Motor neuron (in vitro differentiated cells): ENCODE measurements at regions of chr3 and their contacts with region 1.

Region 1: DNA sequence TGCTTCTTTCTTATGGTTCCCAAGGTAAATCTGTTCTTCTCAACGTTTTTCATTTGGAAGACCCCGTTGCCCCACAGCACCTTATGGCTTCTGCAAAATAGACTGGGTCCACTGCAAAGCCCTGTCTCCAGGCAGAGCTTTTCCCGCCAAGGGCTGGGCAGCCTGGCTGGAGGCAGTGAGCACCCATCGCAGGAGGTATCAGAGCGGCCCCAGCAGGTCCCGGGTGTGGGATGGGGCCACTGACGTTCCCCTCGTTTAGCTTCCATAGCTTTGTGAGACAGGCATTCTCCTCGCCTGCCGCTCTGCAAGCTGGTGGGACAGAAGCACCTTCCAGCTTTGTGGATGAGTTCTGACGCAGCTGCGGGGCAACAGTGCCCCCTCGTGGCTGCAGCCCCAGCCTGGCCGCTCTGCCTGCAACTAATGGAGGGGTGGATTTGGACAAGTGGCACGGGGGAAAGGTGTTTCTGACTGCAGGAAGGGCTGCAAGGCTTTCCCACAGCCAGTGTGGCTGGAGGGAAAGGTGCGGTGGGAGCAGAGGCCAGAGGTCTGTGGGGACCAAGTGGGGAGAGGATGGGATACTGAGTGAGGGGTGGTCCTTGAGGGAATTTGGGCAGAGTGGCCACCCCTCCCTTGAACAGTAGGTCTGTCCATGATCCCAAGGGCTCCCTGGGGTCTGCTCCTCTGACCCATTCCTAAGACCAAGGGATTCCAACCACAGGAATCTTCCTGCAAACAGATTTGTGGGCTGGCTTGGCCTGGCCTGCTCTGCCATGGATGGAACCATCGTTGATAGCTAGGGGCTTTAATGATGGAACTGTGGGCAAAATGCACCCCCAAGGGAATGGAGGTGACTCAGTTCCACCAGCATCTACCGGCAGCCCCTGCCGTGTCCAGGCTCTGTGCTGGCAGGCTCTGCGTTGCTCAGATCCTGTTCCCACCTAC is 99.4 kb downstream of the FBLN2 start:
- ATAC-seq: peak; percentile 47 to 96 (median 92)
- H3K4me3 ChIP-seq: no peak overlapping the region
- H3K27ac ChIP-seq: no peak overlapping the region
- H3K4me1 ChIP-seq: peaks cover 10 to 13% of the 10 kb centered on the region in 2 donors

Region 2: GRCh38 chr3:13091898-13092611 is 556.3 kb before region 1 on chr3:
- in situ Hi-C with region 1: loop called in 4 of 9 experiments (anchors 25 kb)
- ATAC-seq: peak; percentile 6 to 72 (median 38)
- H3K4me3 ChIP-seq: no peak overlapping the region
- H3K27ac ChIP-seq: no peak overlapping the region
- H3K4me1 ChIP-seq: peaks cover 32 to 36% of the 10 kb centered on the region in 2 donors

Region 3: GRCh38 chr3:13479581-13480339 is 168.6 kb before region 1 on chr3 and contains the start of gene HDAC11:
- in situ Hi-C with region 1: loop called in 2 of 9 experiments (anchors 25 kb)
- ATAC-seq: peak; percentile 88 to 97 (median 90)
- H3K4me3 ChIP-seq: peak within 1 kb of the TSS; percentile 46 to 89 (median 53)
- H3K27ac ChIP-seq: peak within 1 kb of the TSS; percentile 57 to 76
- H3K4me1 ChIP-seq: peaks cover 25 to 32% of the 10 kb centered on the region in 2 donors
- total RNA-seq, gene HDAC11: 2.7 to 23.8 (median 11.0) TPM

Region 4: GRCh38 chr3:13495921-13496723 is 152.2 kb before region 1 on chr3:
- in situ Hi-C with region 1: loop called (anchors 5 to 25 kb)
- ATAC-seq: peak; percentile 72 to 92 (median 90)
- H3K4me3 ChIP-seq: no peak overlapping the region
- H3K27ac ChIP-seq: no peak overlapping the region
- H3K4me1 ChIP-seq: peaks cover 4 to 5% of the 10 kb centered on the region in 2 donors

Region 5: GRCh38 chr3:13884851-13885703 is 236.7 kb after region 1 on chr3:
- in situ Hi-C with region 1: loop called in 6 of 9 experiments (anchors 5 to 25 kb)
- ATAC-seq: peak in 2 of 8 experiments; percentile 9 to 47
- H3K4me3 ChIP-seq: no peak overlapping the region
- H3K27ac ChIP-seq: no peak overlapping the region
- H3K4me1 ChIP-seq: no peaks in the 10 kb centered on the region

Region 6: DNA sequence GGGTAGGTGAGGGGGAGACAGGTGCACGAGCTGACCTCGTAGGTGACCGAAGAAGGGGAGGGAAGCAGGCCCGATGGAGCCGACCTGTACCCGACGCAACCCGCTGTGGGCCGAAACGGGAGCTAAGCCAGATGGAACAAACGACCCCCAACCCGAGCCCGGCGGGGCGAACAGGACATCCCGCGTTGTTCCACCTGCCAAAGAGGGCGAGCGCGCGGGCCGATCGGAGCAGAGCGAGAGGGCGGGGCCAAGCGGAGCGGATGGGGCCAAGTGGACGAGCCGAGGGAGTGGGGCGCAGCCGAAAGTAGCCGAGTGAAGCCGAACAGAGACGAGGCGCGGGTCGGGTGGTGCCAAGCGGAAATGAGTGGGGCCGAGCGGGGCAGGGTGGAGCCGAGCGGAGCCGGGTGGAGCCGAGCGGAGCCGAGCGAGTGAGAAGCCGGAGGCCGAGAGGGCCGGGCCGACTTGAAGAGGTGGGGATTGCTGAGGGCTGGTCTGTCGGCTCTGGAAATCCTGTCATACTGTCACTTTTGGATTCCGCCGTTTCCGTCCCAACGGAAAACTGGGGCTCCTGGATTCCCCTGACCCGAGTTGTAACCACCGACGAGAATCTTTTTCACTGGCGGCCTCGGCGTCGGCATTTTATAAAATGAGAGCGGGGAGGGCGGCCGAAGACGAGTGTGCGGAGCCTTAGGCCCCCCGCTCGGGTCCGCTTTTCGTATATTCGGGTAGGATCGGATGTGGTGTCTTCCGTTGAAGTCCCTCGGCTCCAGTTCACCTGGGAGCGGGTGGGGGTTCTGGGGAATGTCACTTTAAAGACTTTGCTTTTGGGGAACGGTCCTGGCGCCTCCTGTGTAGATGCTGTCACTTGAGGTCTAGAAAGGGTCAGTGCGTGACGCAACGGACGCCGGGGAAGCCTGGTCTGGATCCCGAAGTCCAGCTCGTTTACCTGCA is 247.1 kb after region 1 on chr3:
- in situ Hi-C with region 1: loop called in 3 of 9 experiments (anchors 25 kb)
- ATAC-seq: peak; percentile 95 to 99 (median 98)
- H3K4me3 ChIP-seq: peak overlapping the region; percentile 36 to 52 (median 45)
- H3K27ac ChIP-seq: no peak overlapping the region
- H3K4me1 ChIP-seq: peaks cover 4 to 13% of the 10 kb centered on the region in 2 donors